AG04450 (cell line): ENCODE measurements at regions of chr4 and their contacts with region 1.

Region 1: GRCh38 chr4:114386637-114387233 is 211.9 kb upstream of the UGT8 start:
- DNase-seq: no peak
- H3K4me3 ChIP-seq: no peak overlapping the region
- H3K27ac ChIP-seq: no peak overlapping the region
- H3K27me3 ChIP-seq: peaks cover 6% of the 10 kb centered on the region
- CTCF ChIP-seq: peak; percentile 61

Region 2: DNA sequence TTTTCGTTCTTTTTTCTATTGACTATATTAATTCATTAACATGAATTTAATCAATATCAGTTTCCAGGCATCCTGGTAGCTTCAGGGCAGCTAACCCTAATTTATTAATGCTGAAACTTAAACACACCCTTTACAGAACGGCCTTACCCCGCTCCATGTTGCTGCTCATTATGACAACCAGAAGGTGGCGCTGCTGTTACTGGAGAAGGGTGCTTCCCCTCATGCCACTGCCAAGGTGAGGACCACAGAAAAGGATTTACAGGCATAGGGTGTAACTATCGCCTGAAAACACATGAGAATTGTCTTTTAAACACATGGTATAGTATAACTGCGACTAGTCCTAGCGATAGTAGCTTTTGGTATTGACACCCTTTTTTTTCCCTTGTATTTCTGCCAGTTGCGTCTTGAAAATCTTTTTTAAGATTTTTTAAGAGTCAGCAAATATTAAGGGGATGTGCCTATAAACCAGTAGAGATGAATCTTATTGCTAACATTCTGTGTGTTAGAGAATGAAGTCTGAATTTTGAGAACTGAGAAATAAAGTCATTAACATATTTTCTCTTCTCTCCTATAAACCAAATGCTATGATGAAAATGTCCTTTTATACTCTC is 1108.3 kb before region 1 on chr4:
- CTCF ChIA-PET with region 1: interaction called, 15 read pairs
- POLR2A ChIA-PET with region 1: no interaction called
- DNase-seq: peak; percentile 61
- H3K4me3 ChIP-seq: no peak overlapping the region
- H3K27ac ChIP-seq: no peak overlapping the region
- H3K27me3 ChIP-seq: no peaks in the 10 kb centered on the region
- CTCF ChIP-seq: peak; percentile 97

Region 3: GRCh38 chr4:114435116-114435515 is 48.4 kb after region 1 on chr4:
- CTCF ChIA-PET with region 1: no interaction called
- POLR2A ChIA-PET with region 1: no interaction called
- DNase-seq: no peak
- H3K4me3 ChIP-seq: no peak overlapping the region
- H3K27ac ChIP-seq: no peak overlapping the region
- H3K27me3 ChIP-seq: no peaks in the 10 kb centered on the region
- CTCF ChIP-seq: no peak

Region 4: DNA sequence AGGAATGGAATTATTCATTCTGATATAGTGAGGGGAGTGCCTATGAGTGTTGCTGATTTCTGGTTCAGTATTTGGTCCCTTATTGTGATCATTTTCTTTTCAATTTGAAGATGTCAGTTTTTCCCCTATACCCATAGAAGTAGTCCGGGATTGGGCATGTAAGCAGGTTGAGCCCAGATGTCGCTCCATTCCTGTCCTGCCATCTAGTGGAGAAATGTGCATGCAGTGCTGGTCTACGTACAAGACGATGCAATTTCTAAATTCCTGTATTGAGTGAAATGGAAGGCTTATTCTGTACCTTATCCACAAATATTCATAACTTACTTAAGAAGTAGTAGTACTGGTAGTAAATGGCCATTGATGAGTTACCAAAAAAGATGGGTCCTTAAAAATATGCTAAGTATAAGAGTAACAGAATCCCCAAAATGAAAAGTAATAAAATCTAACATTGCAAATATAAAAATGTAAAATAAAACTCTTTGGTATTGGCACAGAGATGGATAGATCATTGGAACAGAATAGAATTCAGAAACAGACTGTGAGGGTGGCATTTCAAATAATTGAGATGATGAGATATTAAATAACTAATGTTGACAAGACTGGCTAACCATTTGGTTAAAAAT is 272.8 kb after region 1 on chr4:
- CTCF ChIA-PET with region 1: interaction called, 15 read pairs
- POLR2A ChIA-PET with region 1: no interaction called
- DNase-seq: peak; percentile 16
- H3K4me3 ChIP-seq: no peak overlapping the region
- H3K27ac ChIP-seq: no peak overlapping the region
- H3K27me3 ChIP-seq: no peaks in the 10 kb centered on the region
- CTCF ChIP-seq: peak; percentile 89

Region 5: DNA sequence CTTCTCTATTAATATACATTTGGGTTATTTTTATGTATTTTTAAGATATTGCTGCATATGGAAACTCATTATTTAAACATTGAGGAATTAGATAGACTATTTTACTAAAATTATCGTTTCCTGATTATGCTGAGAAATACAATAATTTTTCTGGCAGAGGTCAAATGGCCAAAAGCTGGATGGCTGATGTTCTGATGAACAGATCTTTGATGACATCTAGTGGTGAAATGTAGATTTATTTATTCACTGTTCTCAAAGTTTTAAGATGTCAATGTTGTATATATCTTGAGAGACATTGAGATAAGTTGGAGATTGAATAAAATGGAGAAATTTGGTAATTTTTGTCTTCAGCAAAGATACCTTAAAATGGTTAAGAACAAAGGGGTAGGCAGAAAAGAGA is 308.0 kb after region 1 on chr4:
- CTCF ChIA-PET with region 1: interaction called, 27 read pairs
- POLR2A ChIA-PET with region 1: no interaction called
- DNase-seq: no peak
- H3K4me3 ChIP-seq: no peak overlapping the region
- H3K27ac ChIP-seq: no peak overlapping the region
- H3K27me3 ChIP-seq: no peaks in the 10 kb centered on the region
- CTCF ChIP-seq: peak; percentile 56